ENCODE measurements at regions of chr5 and their contacts with region 1.

Region 1: GRCh38 chr5:74240786-74241750 is 399.5 kb downstream of the ENC1 start:
- DNase-seq: peak; percentile 50
- ATAC-seq: peak; percentile 33; the same call in 1 of the 2 replicates
- H3K4me3 ChIP-seq: peak overlapping the region; percentile 16; the same call in 1 of the 2 replicates
- H3K27ac ChIP-seq: peak overlapping the region; percentile 97
- H3K4me1 ChIP-seq: peaks cover 48% of the 10 kb centered on the region
- H3K27me3 ChIP-seq: no peaks in the 10 kb centered on the region
- CTCF ChIP-seq: no peak

Region 2: DNA sequence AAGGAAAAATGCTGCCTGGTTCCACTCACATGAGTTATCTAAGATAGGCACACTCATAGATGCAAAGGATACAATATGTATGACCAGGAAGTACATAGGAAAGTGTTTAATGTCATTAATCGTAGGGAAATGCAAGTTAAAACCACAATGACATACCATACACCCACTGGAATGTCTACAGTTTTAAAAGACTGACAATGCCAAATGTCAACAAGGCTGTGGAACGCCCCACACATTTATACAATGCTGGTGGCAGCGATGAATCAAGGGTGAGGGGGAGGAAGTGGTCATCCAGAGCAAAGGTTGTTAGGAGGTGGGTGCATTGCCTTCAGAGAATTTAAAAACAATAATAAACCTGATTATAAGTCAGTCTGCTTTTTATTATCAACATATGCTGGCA is 177.2 kb before region 1 on chr5:
- CTCF ChIA-PET with region 1: no interaction called
- POLR2A ChIA-PET with region 1: no interaction called
- intact Hi-C with region 1: loop called (anchors 5 kb)
- DNase-seq: peak; percentile 90
- ATAC-seq: peak; percentile 95
- H3K4me3 ChIP-seq: no peak overlapping the region
- H3K27ac ChIP-seq: peak overlapping the region; percentile 55
- H3K4me1 ChIP-seq: peaks cover 45% of the 10 kb centered on the region
- H3K27me3 ChIP-seq: no peaks in the 10 kb centered on the region
- CTCF ChIP-seq: no peak

Region 3: GRCh38 chr5:74127381-74128320 is 113.4 kb before region 1 on chr5:
- CTCF ChIA-PET with region 1: no interaction called
- POLR2A ChIA-PET with region 1: no interaction called
- intact Hi-C with region 1: loop called (anchors 2 kb)
- DNase-seq: peak; percentile 55
- ATAC-seq: peak; percentile 72
- H3K4me3 ChIP-seq: peak overlapping the region; percentile 63
- H3K27ac ChIP-seq: no peak overlapping the region
- H3K4me1 ChIP-seq: peaks cover 21% of the 10 kb centered on the region
- H3K27me3 ChIP-seq: no peaks in the 10 kb centered on the region
- CTCF ChIP-seq: peak; percentile 51

Region 4: GRCh38 chr5:74167206-74167929 is 73.7 kb before region 1 on chr5:
- CTCF ChIA-PET with region 1: no interaction called
- POLR2A ChIA-PET with region 1: interaction called, 4 read pairs
- intact Hi-C with region 1: loop called (anchors 10 kb)
- DNase-seq: peak; percentile 80
- ATAC-seq: peak; percentile 95
- H3K4me3 ChIP-seq: peak overlapping the region; percentile 45
- H3K27ac ChIP-seq: peak overlapping the region; percentile 94
- H3K4me1 ChIP-seq: peaks cover 26% of the 10 kb centered on the region
- H3K27me3 ChIP-seq: no peaks in the 10 kb centered on the region
- CTCF ChIP-seq: no peak

Region 5: GRCh38 chr5:74251141-74252035 is 10.3 kb after region 1 on chr5:
- CTCF ChIA-PET with region 1: no interaction called
- POLR2A ChIA-PET with region 1: no interaction called
- intact Hi-C with region 1: loop called (anchors 1 kb)
- DNase-seq: peak; percentile 91
- ATAC-seq: peak; percentile 98
- H3K4me3 ChIP-seq: no peak overlapping the region
- H3K27ac ChIP-seq: peak overlapping the region; percentile 71
- H3K4me1 ChIP-seq: peaks cover 17% of the 10 kb centered on the region
- H3K27me3 ChIP-seq: no peaks in the 10 kb centered on the region
- CTCF ChIP-seq: no peak

Region 6: DNA sequence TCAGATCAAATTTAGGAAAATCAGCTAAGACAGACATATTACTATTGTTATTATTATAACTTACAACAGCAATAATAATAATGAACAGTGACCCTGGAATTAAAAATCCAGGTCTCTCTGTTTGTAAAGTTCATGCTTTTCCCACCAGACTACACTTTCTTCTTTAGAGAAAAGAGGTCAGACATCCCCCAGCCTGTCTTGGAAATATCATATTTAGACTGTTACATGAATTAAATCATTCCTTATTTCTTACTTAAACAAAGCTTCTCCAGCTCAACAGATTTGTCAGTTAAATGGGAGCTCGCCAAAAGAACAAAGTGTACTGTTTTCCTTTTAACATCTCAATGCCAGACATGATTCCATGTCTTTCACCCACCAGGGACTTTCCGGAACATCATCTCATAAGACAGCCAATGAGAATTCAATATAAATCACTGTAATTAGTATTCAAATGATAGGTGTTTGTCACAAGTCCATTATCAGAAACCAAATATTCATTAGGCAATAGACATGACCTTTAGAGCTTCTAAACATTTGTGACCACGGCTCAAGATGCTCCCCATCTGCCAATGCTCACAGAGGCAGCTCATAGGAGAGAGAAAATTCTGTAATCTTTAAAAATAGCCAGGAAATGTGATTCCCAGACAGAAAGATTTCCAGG is 47.5 kb after region 1 on chr5:
- CTCF ChIA-PET with region 1: no interaction called
- POLR2A ChIA-PET with region 1: no interaction called
- intact Hi-C with region 1: no loop called
- DNase-seq: no peak
- ATAC-seq: no peak
- H3K4me3 ChIP-seq: no peak overlapping the region
- H3K27ac ChIP-seq: no peak overlapping the region
- H3K4me1 ChIP-seq: peaks cover 7% of the 10 kb centered on the region; the same call in 1 of the 2 replicates
- H3K27me3 ChIP-seq: no peaks in the 10 kb centered on the region
- CTCF ChIP-seq: no peak

Region 7: DNA sequence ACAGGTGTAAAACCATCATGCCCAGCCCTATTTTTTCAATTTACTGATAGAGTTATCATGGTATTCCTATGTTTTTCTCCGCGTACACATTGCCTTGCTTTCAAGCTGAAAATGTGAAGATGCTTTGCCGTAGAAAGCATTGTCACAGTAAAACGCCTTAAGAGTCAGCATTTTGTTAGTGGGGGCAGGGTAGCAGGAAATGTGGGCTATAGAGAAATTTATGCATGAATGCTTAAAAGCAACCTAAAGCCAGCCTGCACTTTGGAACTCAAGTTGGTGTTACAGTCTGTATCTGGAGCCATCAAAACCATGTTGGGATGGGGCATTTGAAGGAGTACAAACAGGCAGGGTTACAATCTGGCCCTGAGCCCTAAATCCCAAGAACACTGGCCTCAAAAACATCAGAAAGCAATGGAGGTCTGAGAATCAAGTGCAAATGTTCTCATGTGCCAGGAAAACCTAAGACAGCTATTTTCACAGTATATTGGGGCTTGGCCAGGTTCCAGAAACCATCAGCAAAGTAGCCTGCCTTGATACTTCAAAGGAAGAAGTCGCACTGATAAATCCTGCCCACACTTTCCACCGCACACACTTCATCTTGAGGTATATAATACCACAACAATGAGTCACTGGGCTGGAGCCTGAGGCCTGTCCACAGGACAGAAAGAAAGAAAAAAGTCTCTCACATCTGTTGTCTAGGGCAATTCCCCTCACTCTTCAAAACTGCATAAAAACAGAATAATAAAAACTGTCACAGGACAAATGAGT is 85.7 kb after region 1 on chr5:
- CTCF ChIA-PET with region 1: no interaction called
- POLR2A ChIA-PET with region 1: no interaction called
- intact Hi-C with region 1: loop called (anchors 5 kb)
- DNase-seq: peak; percentile 92
- ATAC-seq: peak; percentile 74
- H3K4me3 ChIP-seq: no peak overlapping the region; the same call in 1 of the 2 replicates
- H3K27ac ChIP-seq: peak overlapping the region; percentile 70
- H3K4me1 ChIP-seq: peaks cover 27% of the 10 kb centered on the region
- H3K27me3 ChIP-seq: no peaks in the 10 kb centered on the region
- CTCF ChIP-seq: no peak

Region 8: DNA sequence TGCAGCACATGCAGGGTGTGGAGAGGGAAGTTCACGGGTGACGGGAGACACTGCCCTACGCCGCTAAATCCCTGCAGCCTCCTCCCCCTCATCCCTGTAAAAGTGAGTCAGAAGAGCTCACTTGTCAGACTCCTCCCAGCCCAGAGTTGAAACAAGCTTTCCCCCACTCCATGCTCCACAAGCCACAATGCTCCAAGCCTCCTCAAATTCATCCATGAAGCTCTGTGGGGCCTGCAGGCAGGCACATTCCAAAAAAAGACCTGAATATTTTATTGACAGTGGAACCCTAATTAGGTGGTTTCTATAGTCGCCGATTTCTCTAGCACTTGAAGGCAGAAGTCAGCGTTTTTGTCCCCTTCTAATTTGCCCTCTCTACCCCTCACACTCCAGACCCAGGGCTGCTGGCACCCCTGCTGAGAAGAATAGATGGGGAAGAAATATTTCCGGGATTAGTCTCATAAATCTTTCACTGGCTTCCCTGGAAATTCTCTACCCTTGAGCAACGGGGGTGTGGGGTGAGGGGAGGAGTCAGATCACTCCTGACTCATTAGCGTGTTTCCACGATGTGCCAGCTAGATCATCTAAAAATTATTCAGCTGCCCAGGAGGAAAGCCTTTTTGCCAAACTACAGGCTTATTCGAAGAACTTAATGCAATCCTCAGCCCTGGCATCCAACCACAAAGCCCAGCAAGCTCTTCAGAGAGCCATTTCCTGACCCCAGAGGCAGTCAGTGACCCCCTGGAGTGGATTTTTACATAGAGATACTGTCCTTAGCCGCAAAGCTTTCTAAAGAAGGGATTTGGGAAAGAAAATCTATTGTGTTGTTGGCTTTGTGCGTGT is 302.3 kb after region 1 on chr5:
- CTCF ChIA-PET with region 1: no interaction called
- POLR2A ChIA-PET with region 1: no interaction called
- intact Hi-C with region 1: loop called (anchors 5 kb)
- DNase-seq: peak; percentile 92
- ATAC-seq: peak; percentile 85
- H3K4me3 ChIP-seq: peak overlapping the region; percentile 49
- H3K27ac ChIP-seq: peak overlapping the region; percentile 94
- H3K4me1 ChIP-seq: peaks cover 52% of the 10 kb centered on the region
- H3K27me3 ChIP-seq: no peaks in the 10 kb centered on the region
- CTCF ChIP-seq: no peak

Measured in PC-3 (cell line).